GM10248 (cell line): ENCODE measurements at regions of chr5 and their contacts with region 1.

Region 1: DNA sequence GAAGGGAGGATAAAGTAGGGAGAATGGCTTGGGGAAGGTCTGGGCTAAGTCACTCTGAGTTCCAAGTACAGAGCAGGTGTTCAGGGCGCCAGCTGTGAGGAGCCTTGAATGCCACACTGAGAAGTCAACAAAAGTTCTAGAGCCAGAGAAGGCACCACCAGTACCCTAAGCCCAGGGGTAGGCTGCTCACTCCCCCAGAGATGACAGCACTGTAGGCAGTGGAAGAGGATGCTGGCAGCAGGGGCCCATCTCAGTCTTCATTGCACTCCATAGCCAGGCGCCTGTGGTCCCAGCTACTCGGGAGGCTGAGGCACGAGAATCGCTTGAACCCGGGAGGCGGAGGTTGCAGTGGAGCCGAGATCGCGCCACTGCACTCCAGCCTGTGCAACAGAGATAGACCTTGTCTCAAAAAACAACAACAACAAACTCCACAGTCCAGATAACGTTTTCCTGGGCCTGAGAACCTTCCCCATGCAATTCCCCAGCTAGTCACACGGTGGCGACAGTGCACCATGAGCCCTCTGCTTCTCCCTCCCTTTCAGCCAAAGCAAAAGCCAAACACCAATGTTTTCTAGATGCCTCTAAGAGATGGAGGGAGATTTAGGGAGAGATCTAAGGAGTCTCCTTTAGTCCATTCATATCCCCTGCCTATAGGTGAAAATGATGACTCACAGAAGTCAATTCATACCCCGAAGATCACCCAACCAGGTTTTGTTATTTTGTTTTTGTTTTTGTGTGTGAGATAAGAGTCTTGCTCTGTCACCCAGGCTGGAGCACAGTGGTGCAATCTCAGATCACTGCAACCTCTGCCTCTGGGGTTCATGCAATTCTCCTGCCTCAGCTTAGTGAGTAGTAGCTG is 19.8 kb upstream of the NSD1 start:
- DNase-seq: peak; percentile 91
- CTCF ChIP-seq: peak; percentile 97

Region 2: DNA sequence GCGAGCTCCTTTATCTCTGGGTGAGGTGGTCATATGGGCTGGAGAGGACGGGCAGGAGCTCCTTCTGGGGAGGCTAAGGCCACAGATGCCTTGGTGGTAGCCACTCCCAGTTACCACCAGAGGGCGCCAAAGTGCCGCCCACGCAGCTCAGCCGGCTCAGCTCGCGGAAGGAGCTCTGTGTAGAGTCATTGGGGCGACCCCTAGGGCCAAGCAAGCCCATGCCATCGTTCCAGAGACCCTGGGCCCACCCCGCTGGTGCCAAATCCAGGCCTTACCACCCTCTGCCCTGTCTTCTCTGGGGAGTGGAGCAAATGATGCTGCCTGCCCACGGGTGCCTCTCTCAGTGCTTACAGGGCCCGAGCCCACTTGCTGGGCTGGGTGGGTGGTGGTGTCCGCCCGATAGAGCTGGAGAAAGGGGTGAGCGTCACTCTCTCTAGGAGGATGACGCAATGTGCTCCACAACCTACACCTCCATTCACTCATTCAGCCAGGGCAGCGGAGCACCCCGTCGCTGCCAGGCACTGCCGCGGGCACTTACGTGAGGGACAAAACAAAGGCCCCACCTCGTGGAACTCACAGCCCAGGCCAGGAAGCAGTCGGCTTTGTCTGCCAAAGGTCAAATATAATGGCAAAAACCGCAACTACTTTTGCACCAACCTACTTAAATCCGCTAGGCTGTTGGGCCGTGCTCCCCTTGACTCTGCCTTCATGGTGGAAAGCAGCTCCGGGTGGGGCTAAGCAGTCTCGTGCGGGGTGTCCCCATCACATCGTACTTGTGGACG is 452.7 kb before region 1 on chr5:
- CTCF ChIA-PET with region 1: interaction called, 147 read pairs
- POLR2A ChIA-PET with region 1: no interaction called
- DNase-seq: peak; percentile 94
- CTCF ChIP-seq: peak; percentile 97

Region 3: DNA sequence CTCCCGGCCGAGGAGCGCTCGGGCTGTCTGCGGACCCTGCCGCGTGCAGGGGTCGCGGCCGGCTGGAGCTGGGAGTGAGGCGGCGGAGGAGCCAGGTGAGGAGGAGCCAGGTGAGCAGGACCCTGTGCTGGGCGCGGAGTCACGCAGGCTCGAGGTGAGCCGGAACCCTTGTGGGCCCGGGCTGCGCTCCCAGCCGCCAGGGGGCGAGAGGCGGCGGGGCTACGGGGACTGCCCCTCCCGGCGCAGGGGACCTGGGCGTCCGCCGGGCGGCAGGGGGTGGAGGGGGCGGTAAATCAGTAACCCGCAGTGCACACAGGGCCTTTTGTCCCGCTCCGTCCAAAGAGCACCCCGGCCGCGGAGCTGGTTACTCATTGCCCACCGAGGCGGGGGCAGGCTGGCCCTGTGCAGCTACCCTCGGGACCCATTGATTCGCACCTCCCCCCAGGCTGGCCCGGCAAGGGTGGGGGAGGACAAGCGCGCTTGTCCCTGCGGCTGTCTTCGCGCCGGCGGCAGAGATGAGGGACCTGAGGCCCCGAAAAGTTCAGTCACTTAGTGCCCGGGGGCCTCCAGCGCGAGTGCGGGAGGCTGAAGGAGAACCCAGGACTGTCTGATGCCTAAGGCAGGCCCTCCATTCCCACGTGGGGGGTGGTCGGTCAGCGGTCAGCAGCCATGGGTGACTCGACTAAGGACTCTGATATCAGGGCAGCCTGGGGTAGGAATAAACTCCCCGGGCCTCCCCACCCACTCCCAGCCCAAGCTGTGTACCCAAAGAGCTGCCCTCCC is 26.7 kb before region 1 on chr5:
- CTCF ChIA-PET with region 1: interaction called, 16 read pairs
- POLR2A ChIA-PET with region 1: no interaction called
- DNase-seq: peak; percentile 85
- CTCF ChIP-seq: peak; percentile 69

Region 4: DNA sequence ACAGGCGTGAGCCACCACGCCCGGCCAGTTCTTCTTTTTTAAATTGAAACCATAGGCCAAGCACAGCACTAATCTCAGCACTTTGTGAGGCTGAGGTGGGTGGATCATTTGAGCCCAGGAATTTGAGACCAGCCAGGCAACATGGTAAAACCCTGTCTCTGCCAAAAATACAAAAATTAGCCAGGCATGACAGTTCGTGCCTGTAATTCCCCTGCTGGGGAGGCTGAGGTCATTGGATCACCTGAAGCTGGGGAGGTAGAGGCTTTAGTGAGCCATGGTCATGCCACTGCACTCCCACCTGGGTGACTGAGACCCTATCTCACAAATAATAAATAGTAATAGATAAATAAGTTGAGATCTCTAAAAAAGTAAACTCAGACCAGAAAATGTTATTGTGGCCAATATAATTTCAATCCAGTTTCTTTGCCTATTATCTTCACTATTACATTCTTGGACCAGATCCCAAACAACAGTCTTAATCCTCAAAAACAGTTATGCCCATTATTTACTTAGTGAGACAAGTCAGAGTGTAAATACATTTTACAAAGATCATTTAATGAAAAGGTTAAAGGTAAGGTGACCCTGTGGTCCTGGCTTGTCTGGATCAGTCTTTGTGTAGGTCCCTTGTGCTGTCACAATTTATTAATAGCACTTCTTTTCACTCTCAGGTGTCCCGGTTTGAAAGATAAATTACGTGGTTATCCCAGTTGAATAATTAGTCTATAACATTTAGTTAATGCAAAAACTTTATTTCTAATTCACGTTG is 136.1 kb after region 1 on chr5:
- CTCF ChIA-PET with region 1: interaction called, 10 read pairs
- POLR2A ChIA-PET with region 1: no interaction called
- DNase-seq: no peak
- CTCF ChIP-seq: no peak

Region 5: GRCh38 chr5:177351385-177352329 is 237.9 kb after region 1 on chr5 and contains the start of gene LMAN2:
- CTCF ChIA-PET with region 1: interaction called, 14 read pairs
- POLR2A ChIA-PET with region 1: no interaction called
- DNase-seq: peak; percentile 94
- CTCF ChIP-seq: no peak

Region 6: GRCh38 chr5:177403792-177404640 is 290.2 kb after region 1 on chr5:
- CTCF ChIA-PET with region 1: interaction called, 49 read pairs
- POLR2A ChIA-PET with region 1: no interaction called
- DNase-seq: peak; percentile 93
- CTCF ChIP-seq: peak; percentile 92

Region 7: DNA sequence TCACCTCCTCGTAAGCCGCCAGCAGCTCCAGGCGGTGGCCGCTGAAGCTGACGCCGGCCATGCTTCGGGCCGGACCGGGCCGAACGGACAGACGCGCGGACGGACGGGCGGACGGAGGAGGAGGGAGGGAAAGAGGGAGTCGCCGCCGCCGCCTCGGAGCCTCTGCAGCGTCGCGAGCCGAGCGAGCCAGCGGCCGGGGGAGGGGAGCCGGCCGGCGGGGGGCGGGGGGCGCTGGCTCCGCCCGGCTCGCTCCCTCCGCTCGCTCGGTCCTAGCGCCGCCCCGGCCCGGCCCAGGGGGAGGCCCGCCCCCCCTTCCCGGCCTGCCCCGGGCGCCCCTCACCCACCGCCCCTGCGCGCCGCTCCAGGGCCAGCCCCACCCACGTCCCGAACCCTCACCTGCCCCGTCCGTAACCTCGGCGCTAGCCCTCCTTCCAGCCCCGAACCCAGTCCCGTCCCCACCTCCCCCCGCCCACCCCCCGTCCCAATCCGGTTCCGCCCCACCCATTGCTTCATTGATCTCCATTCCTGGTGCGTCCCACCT is 359.7 kb after region 1 on chr5 and contains the start of gene DBN1:
- CTCF ChIA-PET with region 1: no interaction called
- POLR2A ChIA-PET with region 1: no interaction called
- DNase-seq: peak; percentile 87
- CTCF ChIP-seq: no peak